Breast epithelium (tissue), 4 donors: ENCODE measurements at regions of chr2 and their contacts with region 1.

Region 1: GRCh38 chr2:173374634-173375033 is 20.0 kb downstream of the CDCA7 start:
- DNase-seq: no peak
- H3K4me3 ChIP-seq: no peak overlapping the region
- H3K27ac ChIP-seq: no peak overlapping the region
- H3K4me1 ChIP-seq: no peaks in the 10 kb centered on the region
- H3K27me3 ChIP-seq: no peaks in the 10 kb centered on the region
- CTCF ChIP-seq: no peak
- POLR2A ChIP-seq: no peak

Region 2: GRCh38 chr2:172147944-172148650 is 1226.5 kb before region 1 on chr2:
- intact Hi-C with region 1: no loop called
- DNase-seq: no peak
- H3K4me3 ChIP-seq: peak overlapping the region in 2 of 3 donors; percentile 33 to 56
- H3K27ac ChIP-seq: no peak overlapping the region
- H3K4me1 ChIP-seq: no peaks in the 10 kb centered on the region
- H3K27me3 ChIP-seq: no peaks in the 10 kb centered on the region
- CTCF ChIP-seq: no peak
- POLR2A ChIP-seq: no peak

Region 3: DNA sequence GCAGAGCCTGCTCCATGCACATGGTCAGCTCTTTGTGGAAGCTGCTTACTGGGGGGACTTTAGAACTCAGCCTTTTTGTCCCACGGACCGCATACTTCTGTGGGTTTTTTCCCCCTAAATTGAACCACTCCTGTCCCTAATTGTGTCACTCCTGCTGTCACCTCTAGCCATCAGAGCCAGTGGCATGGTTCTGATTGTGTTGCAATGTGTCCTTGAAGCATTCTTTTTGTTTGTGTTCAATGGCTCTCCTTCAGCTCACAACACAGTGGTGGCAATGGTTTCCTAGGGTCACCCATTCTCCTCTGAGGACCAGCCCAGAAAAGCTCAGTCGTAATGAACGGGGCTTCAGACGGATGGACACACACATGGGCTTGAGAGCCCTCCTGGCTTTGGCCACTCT is 15.4 kb after region 1 on chr2:
- intact Hi-C with region 1: loop called (anchors 1 kb)
- DNase-seq: no peak
- H3K4me3 ChIP-seq: no peak overlapping the region
- H3K27ac ChIP-seq: no peak overlapping the region
- H3K4me1 ChIP-seq: no peaks in the 10 kb centered on the region
- H3K27me3 ChIP-seq: no peaks in the 10 kb centered on the region
- CTCF ChIP-seq: no peak
- POLR2A ChIP-seq: no peak